ENCODE measurements at regions of chr3 and their contacts with region 1.

Region 1: GRCh38 chr3:187112934-187113793 is 26.1 kb downstream of the RPL39L start:
- DNase-seq: peak; percentile 16
- H3K4me3 ChIP-seq: no peak overlapping the region; a peak in 1 of 4 replicates
- H3K27ac ChIP-seq: no peak overlapping the region
- H3K4me1 ChIP-seq: no peaks in the 10 kb centered on the region
- H3K27me3 ChIP-seq: no peaks in the 10 kb centered on the region
- CTCF ChIP-seq: peak; percentile 70
- EP300 ChIP-seq: no peak
- RAD21 ChIP-seq: peak; percentile 60

Region 2: GRCh38 chr3:187101184-187102072 is 11.7 kb before region 1 on chr3:
- CTCF ChIA-PET with region 1: interaction called, 37 read pairs
- POLR2A ChIA-PET with region 1: no interaction called
- DNase-seq: peak; percentile 54
- H3K4me3 ChIP-seq: peak overlapping the region; percentile 40 to 55
- H3K27ac ChIP-seq: peak overlapping the region; percentile 55 to 78; a peak in 3 of 4 replicates
- H3K4me1 ChIP-seq: peaks cover 9 to 10% of the 10 kb centered on the region in 2 experiments
- H3K27me3 ChIP-seq: no peaks in the 10 kb centered on the region
- CTCF ChIP-seq: no peak
- EP300 ChIP-seq: peak in 1 of 2 experiments; percentile 27; a peak in 1 of 4 replicates
- RAD21 ChIP-seq: no peak

Region 3: DNA sequence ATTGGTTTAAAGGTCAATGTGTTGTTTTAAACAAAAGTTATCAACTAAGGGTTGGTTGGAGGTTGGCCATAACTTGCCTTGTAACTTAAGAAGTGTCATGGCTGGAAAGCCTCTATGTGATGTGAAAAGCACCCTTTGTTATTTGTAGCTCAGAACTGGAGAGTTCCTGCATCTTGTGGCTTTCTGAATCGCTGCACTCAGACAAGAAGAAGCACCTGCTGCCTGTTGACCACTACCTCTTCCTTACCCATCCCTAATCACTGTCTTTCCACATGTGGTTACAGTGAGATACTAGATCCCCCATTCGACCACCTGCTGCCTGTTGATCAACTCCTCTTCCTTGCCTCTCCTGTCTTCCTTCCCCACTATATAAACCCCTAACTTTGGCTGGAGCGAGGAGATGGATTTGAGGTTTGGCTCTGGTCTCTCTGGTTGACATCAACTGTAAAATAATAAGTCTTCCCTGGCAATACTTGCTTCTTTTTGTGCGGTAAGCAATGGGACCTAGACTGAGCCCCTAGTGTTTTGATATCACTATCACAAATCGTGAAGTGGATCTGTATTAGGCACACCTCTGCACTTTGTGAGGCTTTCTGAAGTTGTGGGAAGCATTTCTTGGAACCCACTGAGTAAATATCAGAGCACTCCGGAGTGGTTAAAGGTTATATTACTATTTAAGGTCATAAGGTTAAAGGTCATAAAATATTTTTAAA is 12.3 kb after region 1 on chr3:
- CTCF ChIA-PET with region 1: interaction called, 14 read pairs
- POLR2A ChIA-PET with region 1: no interaction called
- DNase-seq: no peak
- H3K4me3 ChIP-seq: no peak overlapping the region
- H3K27ac ChIP-seq: no peak overlapping the region
- H3K4me1 ChIP-seq: no peaks in the 10 kb centered on the region
- H3K27me3 ChIP-seq: no peaks in the 10 kb centered on the region
- CTCF ChIP-seq: no peak
- EP300 ChIP-seq: no peak
- RAD21 ChIP-seq: no peak

Region 4: GRCh38 chr3:187150599-187150998 is 37.4 kb after region 1 on chr3:
- CTCF ChIA-PET with region 1: interaction called, 26 read pairs
- POLR2A ChIA-PET with region 1: no interaction called
- DNase-seq: no peak
- H3K4me3 ChIP-seq: no peak overlapping the region
- H3K27ac ChIP-seq: no peak overlapping the region
- H3K4me1 ChIP-seq: no peaks in the 10 kb centered on the region
- H3K27me3 ChIP-seq: peaks cover 5% of the 10 kb centered on the region; the same call in 1 of the 2 replicates
- CTCF ChIP-seq: peak; percentile 36; the same call in 1 of the 2 replicates
- EP300 ChIP-seq: no peak
- RAD21 ChIP-seq: peak; percentile 22